Calu3 (cell line): ENCODE measurements at regions of chr19 and their contacts with region 1.

Region 1: DNA sequence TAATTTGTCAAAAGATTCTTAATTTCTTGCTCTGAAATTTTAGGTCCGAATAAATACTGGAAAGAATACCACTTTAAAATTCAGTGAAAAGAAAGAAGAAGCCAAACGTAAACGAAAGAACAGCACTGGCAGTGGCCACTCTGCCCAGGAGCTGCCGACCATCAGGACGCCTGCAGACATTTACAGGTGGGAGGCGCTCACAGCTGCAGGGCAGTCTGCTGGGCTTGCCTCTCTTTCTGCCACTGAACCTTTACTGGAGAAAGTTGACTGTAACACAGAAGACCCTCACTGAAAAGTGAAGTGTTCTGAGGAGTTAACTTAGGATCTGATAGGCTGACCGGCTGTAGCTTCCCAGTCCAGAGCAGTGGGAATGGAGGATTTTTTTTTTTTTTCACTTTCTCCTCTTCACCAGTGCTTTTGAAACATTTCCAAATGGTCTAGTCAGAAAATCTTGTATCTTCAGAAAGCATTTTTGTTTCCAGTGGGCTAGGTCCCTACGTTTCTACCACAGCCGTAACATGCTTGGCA is 69.1 kb downstream of the URI1 start:
- DNase-seq: no peak
- H3K4me3 Mint-ChIP-seq: no peak overlapping the region
- H3K27ac Mint-ChIP-seq: no peak overlapping the region
- H3K4me1 Mint-ChIP-seq: no peaks in the 10 kb centered on the region
- H3K27me3 Mint-ChIP-seq: no peaks in the 10 kb centered on the region
- CTCF ChIP-seq: no peak

Region 2: DNA sequence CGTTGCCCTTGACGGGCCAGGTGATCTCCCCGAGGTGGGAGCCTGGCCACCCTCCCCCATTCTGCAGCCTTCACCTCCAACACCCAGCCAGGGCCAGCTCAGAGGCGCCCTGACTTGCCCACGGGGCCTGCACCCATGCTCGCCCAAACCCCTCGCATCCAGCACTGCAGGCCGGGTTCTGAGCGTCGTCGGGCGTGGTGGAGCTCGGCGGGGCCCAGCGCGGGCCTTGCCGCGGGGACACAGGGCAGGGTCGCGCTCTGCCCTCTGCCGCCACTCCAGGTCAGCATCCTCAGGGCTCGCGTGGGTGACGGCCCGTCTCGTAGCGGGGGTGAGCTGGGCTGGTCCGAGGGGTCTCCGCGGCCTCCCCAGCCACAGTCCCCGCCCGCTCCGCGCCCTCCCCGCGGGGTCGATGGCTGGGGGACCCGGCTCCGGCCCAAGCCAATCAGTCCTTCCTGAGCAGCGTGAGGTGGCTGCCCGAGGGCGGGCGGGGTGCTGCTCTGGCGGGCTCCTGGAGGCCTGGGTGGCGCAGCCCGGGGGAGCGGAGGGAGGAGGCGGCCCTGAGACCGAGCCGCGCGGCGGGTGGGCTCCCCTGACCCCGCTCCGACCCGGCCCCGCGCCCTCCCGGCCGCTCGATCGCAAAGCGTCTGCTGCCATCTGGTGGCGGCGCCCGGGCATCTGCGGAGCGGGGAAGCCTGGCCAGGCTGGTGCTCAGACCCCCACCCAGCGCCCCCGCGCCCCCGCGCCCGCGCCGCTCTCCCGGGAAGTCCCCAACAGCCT is 137.9 kb before region 1 on chr19:
- CTCF ChIA-PET with region 1: no interaction called
- intact Hi-C with region 1: no loop called
- DNase-seq: peak; percentile 66
- H3K4me3 Mint-ChIP-seq: peak overlapping the region; percentile 47
- H3K27ac Mint-ChIP-seq: no peak overlapping the region
- H3K4me1 Mint-ChIP-seq: peaks cover 8% of the 10 kb centered on the region
- H3K27me3 Mint-ChIP-seq: peaks cover 39% of the 10 kb centered on the region
- CTCF ChIP-seq: peak; percentile 76

Region 3: DNA sequence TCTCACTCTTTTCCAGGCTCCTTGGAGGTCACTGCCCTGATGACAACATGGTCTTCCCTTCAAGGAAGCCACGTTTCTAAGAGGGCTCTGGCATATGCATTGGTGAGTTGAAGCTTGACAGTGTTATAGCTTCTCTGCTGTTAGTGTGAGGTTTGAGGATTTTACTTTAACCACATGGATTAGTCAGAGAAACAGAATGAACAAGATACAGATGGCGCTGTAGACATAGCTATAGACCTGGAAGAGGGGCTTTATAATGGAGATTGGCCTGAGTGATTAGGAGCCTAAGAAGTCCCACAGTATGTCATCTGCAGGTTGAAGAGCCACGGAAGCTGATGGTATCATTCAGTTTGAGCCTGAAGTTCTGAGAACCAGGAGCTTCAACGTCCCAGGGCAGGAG is 87.5 kb before region 1 on chr19:
- CTCF ChIA-PET with region 1: no interaction called
- intact Hi-C with region 1: no loop called
- DNase-seq: no peak
- H3K4me3 Mint-ChIP-seq: no peak overlapping the region
- H3K27ac Mint-ChIP-seq: no peak overlapping the region
- H3K4me1 Mint-ChIP-seq: no peaks in the 10 kb centered on the region
- H3K27me3 Mint-ChIP-seq: peaks cover 46% of the 10 kb centered on the region
- CTCF ChIP-seq: no peak

Region 4: GRCh38 chr19:29971002-29971401 is 40.1 kb before region 1 on chr19:
- CTCF ChIA-PET with region 1: no interaction called
- intact Hi-C with region 1: loop called (anchors 5 kb)
- DNase-seq: no peak
- H3K4me3 Mint-ChIP-seq: no peak overlapping the region
- H3K27ac Mint-ChIP-seq: no peak overlapping the region
- H3K4me1 Mint-ChIP-seq: no peaks in the 10 kb centered on the region
- H3K27me3 Mint-ChIP-seq: no peaks in the 10 kb centered on the region
- CTCF ChIP-seq: no peak

Region 5: DNA sequence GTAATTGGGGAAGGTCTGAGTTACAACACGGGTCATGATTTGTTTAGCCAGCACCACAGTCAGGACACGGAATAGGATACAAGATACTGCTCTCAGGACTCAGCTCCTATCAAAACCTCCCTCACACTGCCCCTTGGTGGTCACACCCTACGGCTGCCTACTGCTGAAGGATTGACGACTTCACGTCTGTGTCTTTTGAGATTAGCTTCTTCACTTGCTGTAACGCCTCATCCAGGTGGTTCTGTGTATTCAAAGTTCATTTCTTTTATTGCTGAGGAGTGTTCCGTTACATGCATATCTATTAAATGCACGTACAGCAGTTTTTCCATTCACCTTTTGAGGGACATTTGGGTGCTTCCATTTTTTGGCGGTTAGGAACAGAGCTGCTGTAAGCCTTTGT is 22.8 kb before region 1 on chr19:
- CTCF ChIA-PET with region 1: no interaction called
- intact Hi-C with region 1: no loop called
- DNase-seq: no peak
- H3K4me3 Mint-ChIP-seq: no peak overlapping the region
- H3K27ac Mint-ChIP-seq: no peak overlapping the region
- H3K4me1 Mint-ChIP-seq: no peaks in the 10 kb centered on the region
- H3K27me3 Mint-ChIP-seq: no peaks in the 10 kb centered on the region
- CTCF ChIP-seq: no peak

Region 6: DNA sequence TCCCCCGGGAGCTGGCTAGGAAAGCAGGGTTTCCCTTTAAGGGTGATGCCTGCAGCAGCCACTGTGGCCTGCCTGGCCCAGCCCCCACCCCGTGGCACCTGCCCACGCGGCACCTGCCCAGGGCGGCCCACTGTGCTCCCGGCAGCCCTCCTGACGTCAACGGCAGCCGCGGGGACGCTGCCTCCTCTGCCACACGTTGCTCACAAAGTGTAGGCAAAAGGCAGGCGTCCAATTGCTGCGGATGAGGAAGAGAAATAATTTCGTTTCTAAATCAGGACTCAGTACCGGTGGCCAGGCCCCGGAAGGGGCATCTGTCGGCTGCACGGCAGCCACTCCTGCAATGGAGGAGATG is 53.2 kb after region 1 on chr19:
- CTCF ChIA-PET with region 1: no interaction called
- intact Hi-C with region 1: no loop called
- DNase-seq: no peak
- H3K4me3 Mint-ChIP-seq: no peak overlapping the region
- H3K27ac Mint-ChIP-seq: no peak overlapping the region
- H3K4me1 Mint-ChIP-seq: no peaks in the 10 kb centered on the region
- H3K27me3 Mint-ChIP-seq: peaks cover 47% of the 10 kb centered on the region
- CTCF ChIP-seq: no peak